ENCODE measurements at regions of chr11 and their contacts with region 1.

Region 1: DNA sequence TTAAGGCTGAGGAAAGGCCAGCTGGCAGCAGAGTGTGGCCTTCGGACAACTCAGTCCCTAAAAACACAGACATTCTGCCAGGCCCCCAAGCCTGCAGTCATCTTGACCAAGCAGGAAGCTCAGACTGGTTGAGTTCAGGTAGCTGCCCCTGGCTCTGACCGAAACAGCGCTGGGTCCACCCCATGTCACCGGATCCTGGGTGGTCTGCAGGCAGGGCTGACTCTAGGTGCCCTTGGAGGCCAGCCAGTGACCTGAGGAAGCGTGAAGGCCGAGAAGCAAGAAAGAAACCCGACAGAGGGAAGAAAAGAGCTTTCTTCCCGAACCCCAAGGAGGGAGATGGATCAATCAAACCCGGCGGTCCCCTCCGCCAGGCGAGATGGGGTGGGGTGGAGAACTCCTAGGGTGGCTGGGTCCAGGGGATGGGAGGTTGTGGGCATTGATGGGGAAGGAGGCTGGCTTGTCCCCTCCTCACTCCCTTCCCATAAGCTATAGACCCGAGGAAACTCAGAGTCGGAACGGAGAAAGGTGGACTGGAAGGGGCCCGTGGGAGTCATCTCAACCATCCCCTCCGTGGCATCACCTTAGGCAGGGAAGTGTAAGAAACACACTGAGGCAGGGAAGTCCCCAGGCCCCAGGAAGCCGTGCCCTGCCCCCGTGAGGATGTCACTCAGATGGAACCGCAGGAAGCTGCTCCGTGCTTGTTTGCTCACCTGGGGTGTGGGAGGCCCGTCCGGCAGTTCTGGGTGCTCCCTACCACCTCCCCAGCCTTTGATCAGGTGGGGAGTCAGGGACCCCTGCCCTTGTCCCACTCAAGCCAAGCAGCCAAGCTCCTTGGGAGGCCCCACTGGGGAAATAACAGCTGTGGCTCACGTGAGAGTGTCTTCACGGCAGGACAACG is 11.7 kb downstream of the CXCR5 start:
- DNase-seq: peak; percentile 70
- H3K4me3 Mint-ChIP-seq: peak overlapping the region; percentile 3
- H3K27ac Mint-ChIP-seq: peak overlapping the region; percentile 40
- H3K4me1 Mint-ChIP-seq: peaks cover 55% of the 10 kb centered on the region
- H3K27me3 Mint-ChIP-seq: no peaks in the 10 kb centered on the region

Region 2: DNA sequence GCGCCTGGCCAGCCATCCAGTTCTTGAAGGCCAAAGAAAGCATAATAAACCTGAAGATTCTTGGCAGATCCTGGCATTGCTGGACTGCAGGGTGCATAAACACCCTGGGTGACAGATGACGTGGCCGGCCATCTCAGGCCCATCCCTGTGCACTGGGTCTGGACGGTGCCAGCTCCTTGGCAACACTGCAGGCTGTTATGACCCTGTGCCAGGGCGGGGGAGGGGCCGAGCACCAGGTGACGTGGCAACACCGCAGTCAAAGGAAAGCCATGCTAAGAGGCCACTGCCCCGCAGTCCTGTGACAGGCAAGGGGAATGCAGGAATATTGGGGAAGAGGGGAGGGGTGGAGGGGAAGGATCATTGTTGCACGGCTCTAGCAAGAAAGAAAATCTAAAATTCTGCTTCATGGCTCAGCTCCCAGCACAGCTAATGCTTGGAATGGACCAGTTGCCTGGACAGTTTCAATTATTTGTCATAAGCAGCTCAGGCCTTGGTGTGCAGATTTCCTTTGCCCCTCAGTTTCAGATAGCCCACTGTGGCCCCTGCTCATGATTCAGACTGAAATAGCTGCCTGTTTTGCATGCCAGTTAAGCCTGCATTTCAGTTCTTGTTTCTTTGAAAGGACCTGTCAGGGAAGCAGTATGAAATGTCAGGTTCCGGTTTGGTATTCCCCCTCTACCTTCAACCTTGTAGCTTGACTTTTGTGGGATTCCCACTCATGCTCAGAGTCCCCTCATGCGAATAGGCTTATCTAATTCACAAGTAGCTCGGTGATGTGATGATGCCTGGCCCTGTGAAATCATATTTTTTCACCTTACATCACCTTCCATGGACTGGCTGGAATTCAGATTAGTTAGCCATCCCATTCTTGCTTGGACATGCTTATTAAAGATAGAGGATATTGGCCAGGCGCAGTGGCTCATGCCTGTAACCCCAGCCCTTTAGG is 74.7 kb before region 1 on chr11:
- CTCF ChIA-PET with region 1: no interaction called
- POLR2A ChIA-PET with region 1: no interaction called
- DNase-seq: peak; percentile 18
- H3K4me3 Mint-ChIP-seq: no peak overlapping the region
- H3K27ac Mint-ChIP-seq: no peak overlapping the region
- H3K4me1 Mint-ChIP-seq: peaks cover 11% of the 10 kb centered on the region
- H3K27me3 Mint-ChIP-seq: no peaks in the 10 kb centered on the region

Region 3: GRCh38 chr11:118878163-118878563 is 17.2 kb before region 1 on chr11:
- CTCF ChIA-PET with region 1: interaction called, 15 read pairs
- POLR2A ChIA-PET with region 1: interaction called, 29 read pairs
- DNase-seq: no peak
- H3K4me3 Mint-ChIP-seq: no peak overlapping the region
- H3K27ac Mint-ChIP-seq: peak overlapping the region; percentile 93
- H3K4me1 Mint-ChIP-seq: peaks cover 84% of the 10 kb centered on the region
- H3K27me3 Mint-ChIP-seq: peaks cover 1% of the 10 kb centered on the region

Region 4: DNA sequence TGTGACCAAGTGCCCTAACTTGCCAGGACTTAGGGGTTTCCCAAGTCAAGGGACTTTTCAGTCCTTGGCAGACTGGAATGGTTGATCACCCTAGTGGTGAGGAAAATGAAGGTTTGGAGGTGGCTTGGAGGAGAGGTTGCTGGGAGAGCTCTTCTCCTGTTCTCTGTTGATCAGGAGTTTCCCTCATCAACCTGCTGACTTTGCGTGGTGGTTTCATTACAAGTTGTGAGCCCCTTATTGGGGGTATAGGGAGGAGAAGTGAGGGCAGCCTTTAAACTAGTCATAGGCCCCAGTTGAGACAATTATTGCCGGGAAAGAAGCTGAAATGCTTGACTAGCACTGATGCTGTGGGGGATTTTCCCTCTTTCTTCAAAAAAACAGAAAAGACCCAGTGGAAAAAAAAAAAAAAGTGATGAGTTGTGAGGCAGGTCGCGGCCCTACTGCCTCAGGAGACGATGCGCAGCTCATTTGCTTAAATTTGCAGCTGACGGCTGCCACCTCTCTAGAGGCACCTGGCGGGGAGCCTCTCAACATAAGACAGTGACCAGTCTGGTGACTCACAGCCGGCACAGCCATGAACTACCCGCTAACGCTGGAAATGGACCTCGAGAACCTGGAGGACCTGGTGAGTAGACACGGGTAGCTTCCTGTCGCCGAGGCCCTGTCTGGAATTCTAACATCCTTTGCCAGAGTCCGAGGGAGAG is 11.9 kb before region 1 on chr11 and contains the start of gene CXCR5:
- CTCF ChIA-PET with region 1: interaction called, 15 read pairs
- POLR2A ChIA-PET with region 1: interaction called, 29 read pairs
- DNase-seq: no peak
- H3K4me3 Mint-ChIP-seq: peak within 1 kb of the TSS; percentile 53
- H3K27ac Mint-ChIP-seq: peak within 1 kb of the TSS; percentile 16
- H3K4me1 Mint-ChIP-seq: peaks cover 55% of the 10 kb centered on the region
- H3K27me3 Mint-ChIP-seq: peaks cover 16% of the 10 kb centered on the region
- total RNA-seq, gene CXCR5: 0.83 to 0.86 TPM